PC-3 (cell line): ENCODE measurements at regions of chr7 and their contacts with region 1.

Region 1: DNA sequence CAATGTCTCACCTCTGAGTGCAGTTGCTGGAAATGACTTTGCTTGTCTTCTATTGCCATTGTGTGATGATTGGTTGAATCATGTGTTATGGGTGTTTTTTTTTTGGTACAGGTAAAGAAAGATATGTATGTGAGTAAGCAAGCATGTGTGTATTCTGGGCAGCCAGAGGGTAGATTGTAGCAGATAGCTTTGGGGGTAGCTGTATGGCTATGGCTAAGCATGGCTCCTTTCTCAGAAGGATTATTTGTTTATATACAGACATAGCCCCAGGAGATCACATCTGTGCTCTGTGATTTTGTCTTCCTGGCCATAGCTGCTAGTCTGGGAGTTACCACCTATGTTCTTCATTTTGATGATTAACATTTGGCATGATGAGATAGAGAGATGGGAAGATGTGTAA is 23.1 kb upstream of the ICA1 start:
- DNase-seq: no peak
- ATAC-seq: no peak
- H3K4me3 ChIP-seq: no peak overlapping the region
- H3K27ac ChIP-seq: no peak overlapping the region
- H3K4me1 ChIP-seq: no peaks in the 10 kb centered on the region
- H3K27me3 ChIP-seq: no peaks in the 10 kb centered on the region
- CTCF ChIP-seq: no peak

Region 2: DNA sequence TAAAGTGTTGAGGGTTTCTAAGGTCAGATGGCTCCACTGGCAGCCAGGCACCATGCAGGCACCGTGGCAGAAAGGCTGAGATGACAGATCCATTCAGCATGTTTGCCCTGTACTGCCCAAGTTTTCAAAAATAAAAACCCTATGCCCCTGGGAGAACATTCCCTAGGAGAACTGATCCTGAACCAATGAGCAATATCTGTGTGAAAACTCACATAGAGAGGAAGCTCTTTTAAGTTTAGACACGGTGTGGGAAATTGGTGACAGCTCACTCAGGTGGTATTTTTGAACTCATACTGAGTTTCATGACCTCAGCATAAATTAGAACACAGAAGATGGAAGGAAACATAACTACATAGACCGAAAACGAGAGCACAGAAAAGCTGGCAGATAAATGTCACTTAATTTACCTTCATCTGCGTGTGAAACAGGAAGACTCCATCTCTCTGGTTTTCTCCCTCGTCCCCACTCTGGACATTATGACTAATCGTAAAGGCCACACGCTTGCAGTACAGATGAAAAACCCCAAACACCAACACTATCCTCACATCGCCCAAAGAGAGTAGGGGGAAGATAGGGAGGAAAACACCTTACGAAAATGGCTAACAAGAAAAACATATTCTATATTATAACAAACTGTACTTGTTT is 150.9 kb before region 1 on chr7:
- CTCF ChIA-PET with region 1: no interaction called
- POLR2A ChIA-PET with region 1: no interaction called
- intact Hi-C with region 1: no loop called
- DNase-seq: peak; percentile 12
- ATAC-seq: no peak
- H3K4me3 ChIP-seq: no peak overlapping the region
- H3K27ac ChIP-seq: no peak overlapping the region
- H3K4me1 ChIP-seq: no peaks in the 10 kb centered on the region
- H3K27me3 ChIP-seq: no peaks in the 10 kb centered on the region
- CTCF ChIP-seq: no peak

Region 3: DNA sequence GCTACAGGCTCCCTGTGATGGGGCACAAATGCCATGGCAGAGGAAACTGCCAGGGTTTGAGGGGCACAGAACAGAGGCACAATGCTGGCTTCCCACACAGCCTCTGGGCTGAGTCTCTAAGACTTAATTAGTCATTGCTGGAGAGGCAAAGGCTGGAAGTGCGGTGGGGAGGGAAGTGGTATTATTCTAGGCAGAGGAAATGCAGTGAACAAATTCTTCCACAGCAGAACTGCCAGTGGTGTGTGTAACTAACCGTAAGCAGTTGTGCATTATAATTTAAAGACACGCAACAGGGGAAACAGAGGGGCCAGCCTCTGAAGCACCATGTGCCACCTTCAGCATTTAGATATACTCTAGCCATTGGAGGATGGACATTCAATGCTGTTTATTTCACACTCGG is 36.0 kb before region 1 on chr7:
- CTCF ChIA-PET with region 1: no interaction called
- POLR2A ChIA-PET with region 1: no interaction called
- intact Hi-C with region 1: no loop called
- DNase-seq: no peak
- ATAC-seq: no peak
- H3K4me3 ChIP-seq: no peak overlapping the region
- H3K27ac ChIP-seq: no peak overlapping the region
- H3K4me1 ChIP-seq: no peaks in the 10 kb centered on the region
- H3K27me3 ChIP-seq: no peaks in the 10 kb centered on the region
- CTCF ChIP-seq: no peak

Region 4: GRCh38 chr7:8261711-8262695 is 23.1 kb before region 1 on chr7 and contains the start of gene ICA1:
- CTCF ChIA-PET with region 1: no interaction called
- POLR2A ChIA-PET with region 1: interaction called, 12 read pairs
- intact Hi-C with region 1: no loop called
- DNase-seq: peak; percentile 67
- ATAC-seq: peak; percentile 77
- H3K4me3 ChIP-seq: peak within 1 kb of the TSS; percentile 75
- H3K27ac ChIP-seq: 0 out of 2 replicates have a peak within 1 kb of the TSS, but pooled peaks have one; percentile 27
- H3K4me1 ChIP-seq: peaks cover 16% of the 10 kb centered on the region; the same call in 1 of the 2 replicates
- H3K27me3 ChIP-seq: peaks cover 17% of the 10 kb centered on the region; the same call in 1 of the 2 replicates
- CTCF ChIP-seq: no peak
- total RNA-seq, gene ICA1: 1.1 and 3.2 TPM in 2 replicates